Activated CD4-positive, alpha-beta T cell treated with anti-CD3 and anti-CD28 coated beads, Interleukin-2, amount 10 ng/mL, durations not matched to agents 7 days and 5 days (primary cell): ENCODE measurements at regions of chr13 and their contacts with region 1.

Region 1: GRCh38 chr13:33542283-33543088 is 256.9 kb upstream of the STARD13 start:
- DNase-seq: peak; percentile 96
- H3K4me3 Mint-ChIP-seq: peak overlapping the region; percentile 77
- H3K27ac Mint-ChIP-seq: peak overlapping the region; percentile 97
- H3K4me1 Mint-ChIP-seq: peaks cover 34% of the 10 kb centered on the region
- H3K27me3 Mint-ChIP-seq: no peaks in the 10 kb centered on the region

Region 2: DNA sequence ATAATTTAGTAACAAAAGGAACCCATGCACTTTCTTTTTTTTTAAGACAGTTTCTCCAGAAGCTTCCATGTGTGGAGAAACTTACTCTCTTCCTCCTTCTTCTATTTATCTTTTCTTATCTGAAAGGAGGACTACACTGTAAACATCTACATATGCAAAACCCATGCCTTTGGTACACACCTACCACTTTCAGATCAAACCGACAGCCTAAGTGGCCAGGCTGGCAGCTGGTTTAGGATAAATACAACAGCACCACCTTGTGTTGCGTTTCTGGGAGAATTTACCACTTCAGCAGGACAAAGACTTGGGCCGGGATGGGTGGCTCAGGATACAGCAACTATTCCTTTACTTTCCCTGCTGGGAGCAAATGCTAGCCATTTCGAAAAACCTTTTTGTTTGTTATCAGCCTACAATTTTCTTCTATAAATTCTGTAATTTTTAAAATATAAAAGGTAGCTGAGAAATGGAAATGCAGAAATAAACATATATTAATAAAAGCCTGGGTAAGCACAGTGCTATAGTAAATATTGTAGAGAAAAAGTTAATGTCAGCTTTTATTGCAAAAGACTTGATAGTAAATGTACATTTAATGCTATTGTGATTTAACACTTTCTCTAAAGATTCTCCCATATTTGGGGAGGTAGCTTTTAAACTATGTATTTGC is 181.4 kb after region 1 on chr13:
- CTCF ChIA-PET with region 1: interaction called, 13 read pairs
- POLR2A ChIA-PET with region 1: no interaction called
- DNase-seq: peak; percentile 79
- H3K4me3 Mint-ChIP-seq: no peak overlapping the region
- H3K27ac Mint-ChIP-seq: peak overlapping the region; percentile 62
- H3K4me1 Mint-ChIP-seq: peaks cover 16% of the 10 kb centered on the region
- H3K27me3 Mint-ChIP-seq: no peaks in the 10 kb centered on the region